ENCODE measurements at regions of chr11 and their contacts with region 1.

Region 1: DNA sequence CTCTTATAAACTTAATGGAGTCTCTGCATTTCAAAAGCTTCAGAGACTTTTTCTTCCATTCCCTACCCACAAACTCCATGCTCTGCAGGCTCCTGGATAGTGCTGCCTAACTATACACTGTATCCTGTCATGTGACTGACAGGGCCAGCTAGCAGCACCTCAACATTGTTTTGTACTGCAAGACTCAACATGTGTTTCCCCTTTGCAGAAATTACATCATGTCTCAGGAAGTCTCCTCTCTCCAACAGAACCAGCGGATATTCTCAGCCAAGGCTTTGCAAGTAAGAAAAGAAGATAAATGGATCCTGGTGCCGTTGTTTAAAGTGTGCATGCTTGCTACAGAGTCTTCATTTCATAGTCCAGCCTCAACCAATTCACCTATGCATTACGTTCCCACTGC is 164.0 kb upstream of the UBASH3B start:
- DNase-seq: peak in 1 of 2 donors; percentile 50
- ATAC-seq: peak; percentile 55
- H3K4me3 ChIP-seq: no peak overlapping the region
- H3K27ac ChIP-seq: peak overlapping the region in 1 of 2 donors; percentile 28
- H3K4me1 ChIP-seq: peaks cover 6 to 8% of the 10 kb centered on the region in 2 donors
- H3K27me3 ChIP-seq: no peaks in the 10 kb centered on the region

Region 2: DNA sequence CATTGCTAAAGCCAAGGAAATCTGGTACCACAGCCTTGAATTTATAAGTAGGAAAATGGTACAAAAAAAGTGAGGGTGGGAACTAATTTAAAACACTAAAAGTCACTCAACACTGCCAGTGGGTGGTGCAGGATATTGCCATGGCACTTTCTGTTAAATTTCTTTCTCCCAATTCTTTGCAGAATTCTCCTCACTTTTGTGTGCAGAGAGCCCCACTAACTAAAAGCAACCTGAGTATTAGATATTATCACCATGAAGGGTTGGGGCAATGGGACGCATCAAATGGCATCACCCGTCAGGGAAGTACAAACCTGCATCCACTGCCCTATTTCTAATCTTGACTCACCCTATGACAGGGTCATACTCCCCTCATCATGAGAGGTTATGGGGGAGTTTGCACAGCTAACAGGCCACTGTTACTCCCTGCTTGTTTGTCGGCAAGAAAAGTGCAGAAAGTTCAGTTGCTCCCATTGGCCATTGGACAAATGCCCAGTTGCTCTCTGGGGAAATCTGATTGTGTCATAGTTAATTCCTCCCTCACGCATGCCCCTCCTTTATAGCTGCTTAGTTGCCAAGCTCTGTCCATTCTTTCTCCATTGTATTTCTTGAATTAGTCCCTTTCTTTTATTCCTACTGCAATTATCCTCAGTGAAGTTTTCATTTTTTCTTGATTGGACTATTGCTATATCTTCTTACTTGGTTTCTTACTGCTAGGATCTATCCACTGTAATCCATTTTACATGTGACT is 281.7 kb before region 1 on chr11:
- intact Hi-C with region 1: loop called (anchors 2 to 5 kb)
- DNase-seq: peak in 1 of 2 donors; percentile 78
- ATAC-seq: peak; percentile 74
- H3K4me3 ChIP-seq: no peak overlapping the region
- H3K27ac ChIP-seq: peak overlapping the region; percentile 63 to 94
- H3K4me1 ChIP-seq: peaks cover 8 to 12% of the 10 kb centered on the region in 2 donors
- H3K27me3 ChIP-seq: no peaks in the 10 kb centered on the region

Region 3: DNA sequence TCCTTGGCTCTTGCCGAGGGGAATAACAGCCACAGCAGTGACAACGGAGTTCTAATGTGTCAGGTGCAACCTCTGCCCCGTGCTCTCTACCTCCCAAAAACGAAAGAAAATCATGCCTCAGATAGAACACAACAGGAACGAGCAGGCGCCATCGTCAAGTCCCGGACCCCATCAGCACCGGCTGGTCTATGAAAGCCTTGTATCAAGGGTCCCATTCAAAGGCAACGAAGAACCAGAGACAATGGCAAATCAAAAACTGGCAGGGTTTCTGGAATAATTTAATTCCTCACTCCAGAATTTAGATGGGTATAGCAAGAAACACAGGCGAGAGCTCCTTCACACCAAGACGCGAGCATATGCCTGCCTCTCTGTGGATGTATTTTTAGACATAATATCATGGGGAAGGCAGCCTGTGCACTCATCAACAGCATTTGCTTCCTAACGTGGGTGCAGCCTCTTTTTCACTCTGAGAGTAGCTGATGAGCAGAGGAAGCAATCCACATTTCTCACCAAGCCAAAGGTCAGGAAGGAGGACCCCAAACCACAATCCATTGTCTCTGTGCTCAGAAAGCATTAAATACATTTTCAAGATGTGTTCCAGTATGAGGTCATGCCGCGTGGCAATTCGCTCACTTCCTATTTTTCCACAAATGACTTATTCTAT is 182.1 kb before region 1 on chr11:
- intact Hi-C with region 1: loop called in 1 of 2 experiments (anchors 10 kb)
- DNase-seq: peak in 1 of 2 donors; percentile 55
- ATAC-seq: no peak
- H3K4me3 ChIP-seq: peak overlapping the region; percentile 44 to 86
- H3K27ac ChIP-seq: peak overlapping the region; percentile 31 to 97
- H3K4me1 ChIP-seq: peaks cover 1 to 11% of the 10 kb centered on the region in 2 donors
- H3K27me3 ChIP-seq: no peaks in the 10 kb centered on the region

Region 4: DNA sequence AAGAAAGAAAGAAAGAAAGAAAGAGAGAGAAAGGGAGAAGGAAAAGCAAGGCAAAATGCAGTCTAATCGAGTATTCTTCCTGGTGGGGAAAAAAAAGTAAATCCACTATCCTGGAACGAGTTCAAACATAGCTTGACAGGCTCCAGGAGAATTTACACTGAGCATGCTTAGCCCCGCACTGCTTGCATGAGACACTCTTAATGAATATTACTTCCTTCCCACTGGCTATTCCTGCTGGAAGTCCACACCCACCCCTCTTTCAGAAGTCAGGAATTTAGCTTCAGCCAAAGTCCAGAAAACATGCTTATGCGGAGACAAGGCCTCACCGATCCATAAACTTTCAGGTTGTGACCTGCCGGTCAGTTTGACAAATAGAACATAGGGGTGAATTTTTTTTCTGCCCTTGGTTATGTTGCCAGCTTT is 123.7 kb before region 1 on chr11:
- intact Hi-C with region 1: loop called in 1 of 2 experiments (anchors 5 kb)
- DNase-seq: peak in 1 of 2 donors; percentile 54
- ATAC-seq: peak; percentile 78
- H3K4me3 ChIP-seq: no peak overlapping the region
- H3K27ac ChIP-seq: peak overlapping the region; percentile 71 to 82
- H3K4me1 ChIP-seq: peaks cover 3 to 8% of the 10 kb centered on the region in 2 donors
- H3K27me3 ChIP-seq: no peaks in the 10 kb centered on the region

Region 5: DNA sequence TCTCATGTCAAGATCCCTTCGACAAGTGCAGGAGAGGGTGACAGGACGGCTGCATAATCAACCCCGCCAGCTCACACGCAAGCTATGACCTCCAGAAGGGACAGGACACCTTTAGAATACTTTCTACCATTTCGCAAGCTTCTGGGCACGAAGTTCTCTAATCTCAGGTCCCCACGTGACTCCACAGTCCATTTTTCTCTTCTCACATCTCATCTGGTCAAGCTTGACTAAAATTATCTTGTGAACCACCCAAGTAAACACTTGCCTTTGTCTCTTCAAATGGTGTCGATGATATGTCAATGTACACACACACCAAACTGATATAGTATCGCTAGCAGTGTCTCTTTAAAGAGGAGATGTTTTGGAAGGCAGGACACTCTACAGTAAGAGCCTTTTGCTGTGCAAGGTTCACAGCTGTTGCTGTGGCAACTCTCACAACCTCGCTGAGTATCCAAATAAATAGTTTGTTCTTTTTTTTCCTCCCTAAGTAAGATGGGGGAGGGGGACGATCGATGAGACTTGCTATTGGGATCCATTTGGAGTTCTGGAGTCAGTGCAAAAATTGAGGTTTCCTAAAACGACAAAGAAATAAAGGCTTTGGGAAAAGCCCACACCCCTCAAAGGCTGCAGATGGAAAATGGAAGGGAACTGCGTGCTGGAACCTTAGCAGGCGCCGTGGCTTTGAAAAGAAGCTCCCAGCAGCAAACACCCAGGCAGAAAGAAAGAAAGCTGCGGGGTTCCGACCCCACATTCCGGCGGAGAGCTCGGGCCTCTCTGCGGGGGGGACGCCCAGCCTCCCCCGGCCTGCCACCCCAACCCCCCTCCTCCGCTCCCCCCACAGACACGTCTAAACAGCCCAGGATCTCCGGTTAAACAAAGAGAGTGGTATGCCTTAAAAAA is 51.3 kb before region 1 on chr11:
- intact Hi-C with region 1: loop called in 1 of 2 experiments (anchors 5 kb)
- DNase-seq: peak in 1 of 2 donors; percentile 72
- ATAC-seq: peak; percentile 57
- H3K4me3 ChIP-seq: peak overlapping the region; percentile 75 to 89
- H3K27ac ChIP-seq: no peak overlapping the region
- H3K4me1 ChIP-seq: peaks cover 0 to 8% of the 10 kb centered on the region in 2 donors
- H3K27me3 ChIP-seq: no peaks in the 10 kb centered on the region

Region 6: DNA sequence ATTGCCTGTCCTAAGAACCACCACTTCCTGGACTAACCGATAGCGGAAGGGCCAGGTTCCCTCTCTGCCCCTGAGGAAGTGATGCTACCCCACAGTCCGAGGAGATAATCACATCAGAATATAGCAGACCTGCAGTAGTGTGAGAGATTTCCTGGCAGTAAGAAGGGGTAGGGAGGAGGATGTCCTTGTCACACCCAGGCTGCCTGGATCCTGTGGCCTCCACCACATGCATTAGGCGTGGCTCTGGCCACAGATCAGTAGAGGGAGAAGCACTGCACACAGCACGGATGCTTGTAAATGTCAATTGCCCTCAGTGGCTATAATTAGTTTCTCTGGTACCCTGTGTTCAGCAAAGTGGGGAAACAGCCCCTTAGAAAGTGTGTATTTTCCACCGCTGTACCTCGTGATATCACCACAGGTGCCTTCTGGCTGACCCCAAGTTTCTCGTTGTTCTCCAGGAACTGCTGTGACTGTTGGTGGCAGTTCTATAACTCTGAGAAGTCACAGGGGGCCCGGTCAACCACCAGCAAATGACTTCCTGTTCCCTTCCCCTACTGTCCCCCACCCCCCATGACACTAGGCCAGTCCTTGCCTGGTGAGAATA is 225.9 kb after region 1 on chr11:
- intact Hi-C with region 1: no loop called
- DNase-seq: no peak
- ATAC-seq: no peak
- H3K4me3 ChIP-seq: no peak overlapping the region
- H3K27ac ChIP-seq: no peak overlapping the region
- H3K4me1 ChIP-seq: no peaks in the 10 kb centered on the region
- H3K27me3 ChIP-seq: peaks cover 0 to 3% of the 10 kb centered on the region in 2 donors

Measured in aorta (tissue), 5 donors.